BJ (cell line): ENCODE measurements at regions of chr12 and their contacts with region 1.

Region 1: GRCh38 chr12:49110464-49111155 is at the start of gene LMBR1L:
- DNase-seq: peak; percentile 95
- H3K4me3 ChIP-seq: peak within 1 kb of the TSS; percentile 79
- H3K27me3 ChIP-seq: no peaks in the 10 kb centered on the region
- CTCF ChIP-seq: peak; percentile 67
- polyA plus RNA-seq, gene LMBR1L: 37.2 and 63.1 TPM in 2 replicates

Region 2: GRCh38 chr12:49098035-49098451 is 12.6 kb before region 1 on chr12:
- CTCF ChIA-PET with region 1: interaction called, 53 read pairs
- POLR2A ChIA-PET with region 1: no interaction called
- DNase-seq: no peak
- H3K4me3 ChIP-seq: no peak overlapping the region
- H3K27me3 ChIP-seq: peaks cover 8% of the 10 kb centered on the region
- CTCF ChIP-seq: peak; percentile 85